Heart left ventricle (tissue), 16 donors: ENCODE measurements at regions of chr7 and their contacts with region 1.

Region 1: GRCh38 chr7:116929914-116930913 is 23.1 kb upstream of the ST7 start:
- DNase-seq: peak; percentile 75 to 87 (median 81)
- ATAC-seq: peak in 3 of 4 donors; percentile 89 to 92 (median 89)
- H3K4me3 ChIP-seq: no peak overlapping the region
- H3K27ac ChIP-seq: no peak overlapping the region
- H3K4me1 ChIP-seq: peaks cover 0 to 9% (median 0%) of the 10 kb centered on the region in 12 donors
- H3K27me3 ChIP-seq: no peaks in the 10 kb centered on the region
- CTCF ChIP-seq: peak; percentile 91 to 98 (median 94)
- POLR2A ChIP-seq: no peak

Region 2: GRCh38 chr7:116888895-116889294 is 41.3 kb before region 1 on chr7:
- intact Hi-C with region 1: no loop called
- DNase-seq: no peak
- ATAC-seq: no peak
- H3K4me3 ChIP-seq: no peak overlapping the region
- H3K27ac ChIP-seq: no peak overlapping the region
- H3K4me1 ChIP-seq: peaks cover 0 to 19% (median 14%) of the 10 kb centered on the region in 12 donors
- H3K27me3 ChIP-seq: no peaks in the 10 kb centered on the region
- CTCF ChIP-seq: no peak
- POLR2A ChIP-seq: no peak

Region 3: GRCh38 chr7:116984917-116985316 is 54.7 kb after region 1 on chr7:
- intact Hi-C with region 1: loop called in 9 of 10 experiments (anchors 2 to 10 kb)
- DNase-seq: no peak
- ATAC-seq: peak in 2 of 4 donors; percentile 21 to 51
- H3K4me3 ChIP-seq: no peak overlapping the region
- H3K27ac ChIP-seq: no peak overlapping the region
- H3K4me1 ChIP-seq: peaks cover 0 to 14% (median 0%) of the 10 kb centered on the region in 12 donors
- H3K27me3 ChIP-seq: no peaks in the 10 kb centered on the region
- CTCF ChIP-seq: peak; percentile 50 to 75 (median 66)
- POLR2A ChIP-seq: no peak

Region 4: GRCh38 chr7:117041007-117041406 is 110.8 kb after region 1 on chr7:
- intact Hi-C with region 1: no loop called
- DNase-seq: no peak
- ATAC-seq: no peak
- H3K4me3 ChIP-seq: no peak overlapping the region
- H3K27ac ChIP-seq: no peak overlapping the region
- H3K4me1 ChIP-seq: peaks cover 0 to 30% (median 15%) of the 10 kb centered on the region in 12 donors
- H3K27me3 ChIP-seq: no peaks in the 10 kb centered on the region
- CTCF ChIP-seq: no peak
- POLR2A ChIP-seq: no peak

Region 5: DNA sequence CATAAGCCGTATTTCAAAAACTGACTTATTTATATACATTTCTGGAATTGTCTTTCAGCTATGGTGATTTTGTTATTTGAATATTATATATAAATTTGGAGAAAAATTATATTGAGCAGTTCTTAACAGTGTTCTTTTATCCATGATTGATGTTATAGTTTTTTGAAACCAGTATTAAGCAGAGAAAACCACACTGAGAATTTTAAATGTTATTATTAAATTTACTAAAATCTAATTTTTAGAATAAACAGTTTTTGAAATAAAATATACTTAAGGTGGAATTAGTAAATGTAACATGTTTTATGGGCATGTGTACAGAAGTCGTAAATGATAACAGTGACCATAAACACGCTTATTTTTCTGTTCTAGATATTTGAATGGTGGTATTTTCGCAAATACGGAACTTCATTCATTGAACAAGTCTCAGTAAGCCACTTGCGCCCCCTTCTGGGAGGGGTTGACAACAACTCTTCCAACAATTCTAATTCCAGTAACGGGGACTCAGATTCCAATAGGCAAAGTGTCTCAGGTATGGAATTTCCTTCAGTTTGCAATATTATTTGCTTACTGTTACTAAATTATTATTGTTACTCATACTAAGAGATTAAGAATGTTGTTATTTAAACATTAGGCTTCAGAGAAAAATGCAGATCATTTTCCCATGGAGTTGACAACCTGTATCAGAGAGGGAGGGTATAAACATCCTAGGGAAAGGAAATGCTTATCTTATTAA is 189.1 kb after region 1 on chr7:
- intact Hi-C with region 1: loop called in 6 of 10 experiments (anchors 1 to 5 kb)
- DNase-seq: peak; percentile 76 to 82 (median 78)
- ATAC-seq: peak in 3 of 4 donors; percentile 45 to 57 (median 55)
- H3K4me3 ChIP-seq: no peak overlapping the region
- H3K27ac ChIP-seq: no peak overlapping the region
- H3K4me1 ChIP-seq: peaks cover 0 to 28% (median 8%) of the 10 kb centered on the region in 12 donors
- H3K27me3 ChIP-seq: no peaks in the 10 kb centered on the region
- CTCF ChIP-seq: peak; percentile 74 to 93 (median 88)
- POLR2A ChIP-seq: no peak

Region 6: GRCh38 chr7:117127585-117128168 is 197.5 kb after region 1 on chr7:
- intact Hi-C with region 1: loop called in 6 of 10 experiments (anchors 2 kb)
- DNase-seq: peak in 4 of 5 donors; percentile 27 to 38 (median 30)
- ATAC-seq: peak; percentile 27 to 59 (median 50)
- H3K4me3 ChIP-seq: no peak overlapping the region
- H3K27ac ChIP-seq: no peak overlapping the region
- H3K4me1 ChIP-seq: peaks cover 0 to 40% (median 17%) of the 10 kb centered on the region in 12 donors
- H3K27me3 ChIP-seq: no peaks in the 10 kb centered on the region
- CTCF ChIP-seq: peak; percentile 62 to 83 (median 75)
- POLR2A ChIP-seq: no peak

Region 7: GRCh38 chr7:117385340-117386109 is 455.3 kb after region 1 on chr7:
- intact Hi-C with region 1: loop called in 1 of 10 experiments (anchors 10 kb)
- DNase-seq: no peak
- ATAC-seq: no peak
- H3K4me3 ChIP-seq: no peak overlapping the region
- H3K27ac ChIP-seq: no peak overlapping the region
- H3K4me1 ChIP-seq: no peaks in the 10 kb centered on the region
- H3K27me3 ChIP-seq: no peaks in the 10 kb centered on the region
- CTCF ChIP-seq: peak in 10 of 12 donors; percentile 14 to 53 (median 38)
- POLR2A ChIP-seq: no peak